Activated CD4-positive, alpha-beta T cell treated with anti-CD3 and anti-CD28 coated beads for 36 hours (primary cell): ENCODE measurements at regions of chr1 and their contacts with region 1.

Region 1: DNA sequence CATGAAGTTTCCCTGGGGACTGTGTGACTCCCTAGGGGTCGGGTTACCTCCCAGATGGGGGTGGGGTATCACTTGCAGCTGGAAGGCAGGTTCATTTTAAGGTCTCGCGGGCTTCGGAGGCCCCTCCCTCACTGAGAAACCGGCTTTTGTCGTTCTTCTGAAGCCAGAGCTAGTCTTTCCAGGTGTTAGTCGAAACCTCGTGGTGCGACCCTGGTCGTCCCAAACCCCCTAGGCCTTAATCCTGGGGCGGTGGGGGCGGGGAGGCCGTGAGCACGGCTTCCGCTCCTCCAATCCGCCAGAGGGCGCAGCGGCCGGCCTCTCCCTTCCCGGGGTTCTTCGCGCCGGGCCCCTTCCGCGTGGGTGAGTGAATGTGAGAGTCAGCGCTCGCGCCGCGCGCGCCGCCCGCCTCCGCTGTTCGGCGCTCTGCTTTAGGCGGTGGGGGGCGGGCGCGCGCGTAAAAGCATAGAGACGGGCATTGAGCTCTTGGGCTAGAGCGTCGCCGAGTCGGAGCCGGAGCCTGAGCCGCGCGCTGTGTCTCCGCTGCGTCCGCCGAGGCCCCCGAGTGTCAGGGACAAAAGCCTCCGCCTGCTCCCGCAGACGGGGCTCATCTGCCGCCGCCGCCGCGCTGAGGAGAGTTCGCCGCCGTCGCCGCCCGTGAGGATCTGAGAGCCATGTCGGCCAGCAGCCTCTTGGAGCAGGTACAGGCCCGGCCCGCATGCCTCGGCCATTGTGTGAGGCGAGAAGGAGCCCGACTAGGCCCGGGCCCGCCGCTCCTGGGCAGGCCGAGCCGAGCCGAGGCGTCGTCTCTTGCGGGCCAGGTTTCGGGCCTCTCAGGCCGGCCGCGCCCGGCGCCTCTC is at the start of gene YTHDF2:
- DNase-seq: peak; percentile 99
- ATAC-seq: peak; percentile 90
- H3K4me3 Mint-ChIP-seq: peak within 1 kb of the TSS; percentile 95
- H3K27ac Mint-ChIP-seq: peak within 1 kb of the TSS; percentile 90
- H3K4me1 Mint-ChIP-seq: peaks cover 31% of the 10 kb centered on the region
- H3K27me3 Mint-ChIP-seq: no peaks in the 10 kb centered on the region
- total RNA-seq, gene YTHDF2: 74.8 to 98.7 TPM

Region 2: DNA sequence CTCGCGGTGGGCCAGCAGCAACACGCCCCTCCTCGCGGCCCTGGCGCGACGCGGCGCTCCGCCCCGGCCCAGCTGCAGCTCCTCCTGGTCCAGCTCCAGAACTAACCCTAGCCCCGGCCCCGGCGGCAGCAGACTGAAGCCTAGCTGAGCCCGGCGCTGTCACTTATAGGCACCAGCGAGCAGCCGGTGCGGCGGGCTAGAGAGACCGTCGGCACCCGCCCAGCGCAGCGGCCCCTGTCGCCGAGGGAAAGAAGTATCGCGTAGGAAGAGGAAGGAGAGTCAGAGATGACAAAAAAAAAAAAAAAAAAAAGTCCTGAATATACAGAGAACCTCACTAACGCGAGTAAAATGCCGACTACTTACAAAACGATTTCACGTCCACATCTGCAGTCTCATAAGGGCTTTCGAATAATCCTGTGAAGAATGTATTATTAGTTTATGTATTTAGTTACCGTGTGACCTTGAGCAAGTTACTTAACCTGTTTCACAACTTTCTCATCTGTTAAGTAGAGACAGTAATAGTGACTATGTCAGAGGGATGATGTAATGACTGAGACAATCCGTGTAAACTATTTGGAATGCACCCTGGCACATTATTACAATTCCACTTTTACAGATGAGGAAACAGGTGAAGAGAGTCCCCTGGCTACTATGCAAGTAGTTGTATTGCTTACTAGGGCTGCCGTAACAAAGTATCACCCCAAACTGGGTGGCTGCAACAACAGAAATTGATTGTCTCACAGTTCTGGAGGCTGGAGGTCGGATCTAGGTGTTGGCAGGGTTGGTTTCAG is 1581.5 kb before region 1 on chr1 and contains the start of gene SLC9A1:
- CTCF ChIA-PET with region 1: no interaction called
- POLR2A ChIA-PET with region 1: no interaction called
- intact Hi-C with region 1: loop called in 1 of 2 experiments (anchors 5 kb)
- DNase-seq: peak; percentile 95
- ATAC-seq: peak; percentile 90
- H3K4me3 Mint-ChIP-seq: peak within 1 kb of the TSS; percentile 81
- H3K27ac Mint-ChIP-seq: peak within 1 kb of the TSS; percentile 97
- H3K4me1 Mint-ChIP-seq: peaks cover 42% of the 10 kb centered on the region
- H3K27me3 Mint-ChIP-seq: no peaks in the 10 kb centered on the region
- total RNA-seq, gene SLC9A1: 15.6 to 20.4 TPM

Region 3: GRCh38 chr1:28329395-28330153 is 407.1 kb before region 1 on chr1:
- CTCF ChIA-PET with region 1: no interaction called
- POLR2A ChIA-PET with region 1: no interaction called
- intact Hi-C with region 1: loop called in 1 of 2 experiments (anchors 1 kb)
- DNase-seq: peak; percentile 61
- ATAC-seq: peak; percentile 19
- H3K4me3 Mint-ChIP-seq: peak overlapping the region; percentile 96
- H3K27ac Mint-ChIP-seq: peak overlapping the region; percentile 97
- H3K4me1 Mint-ChIP-seq: peaks cover 39% of the 10 kb centered on the region
- H3K27me3 Mint-ChIP-seq: no peaks in the 10 kb centered on the region

Region 4: GRCh38 chr1:28518000-28518744 is 218.5 kb before region 1 on chr1:
- CTCF ChIA-PET with region 1: no interaction called
- POLR2A ChIA-PET with region 1: no interaction called
- intact Hi-C with region 1: loop called (anchors 1 to 5 kb)
- DNase-seq: peak; percentile 95
- ATAC-seq: peak; percentile 66
- H3K4me3 Mint-ChIP-seq: peak overlapping the region; percentile 77
- H3K27ac Mint-ChIP-seq: peak overlapping the region; percentile 83
- H3K4me1 Mint-ChIP-seq: peaks cover 34% of the 10 kb centered on the region
- H3K27me3 Mint-ChIP-seq: no peaks in the 10 kb centered on the region

Region 5: DNA sequence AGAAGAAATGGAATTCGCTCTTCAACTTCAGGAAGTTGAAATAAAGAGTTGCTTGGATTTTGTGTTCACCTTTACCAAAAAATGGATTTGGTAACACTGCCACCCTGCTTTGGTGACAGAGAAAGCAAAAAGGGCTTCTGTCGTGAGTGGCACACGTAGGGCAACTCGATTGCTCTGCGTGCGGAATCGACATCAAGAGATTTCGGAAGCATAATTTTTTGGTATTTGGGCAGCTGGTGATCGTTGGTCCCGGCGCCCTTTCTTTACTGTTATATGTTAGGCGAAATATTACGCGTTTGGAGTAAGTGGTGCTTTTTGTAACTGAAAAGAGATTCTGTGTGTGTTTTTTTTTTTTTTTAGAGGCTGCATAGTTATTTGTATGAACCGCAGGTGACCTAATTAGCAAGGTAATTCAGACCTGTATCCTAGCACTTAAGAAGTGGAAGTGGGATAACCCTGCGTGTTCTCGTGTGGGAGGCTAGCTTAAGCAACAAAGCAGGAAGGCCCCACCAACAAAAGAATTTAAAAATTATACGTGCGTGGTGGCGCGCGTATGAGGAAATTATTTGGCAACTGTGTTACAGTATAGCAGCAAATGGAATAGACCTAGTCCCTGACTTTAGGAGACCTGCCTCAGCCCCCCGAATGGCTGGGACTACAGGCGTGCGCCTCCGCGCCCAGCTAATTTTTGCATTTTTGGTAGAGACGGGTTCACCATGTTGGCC is 88.0 kb before region 1 on chr1 and contains the start of gene RNU11:
- CTCF ChIA-PET with region 1: interaction called, 24 read pairs
- POLR2A ChIA-PET with region 1: interaction called, 50 read pairs
- intact Hi-C with region 1: loop called (anchors 1 kb)
- DNase-seq: peak; percentile 93
- ATAC-seq: peak; percentile 83
- H3K4me3 Mint-ChIP-seq: peak within 1 kb of the TSS; percentile 83
- H3K27ac Mint-ChIP-seq: peak within 1 kb of the TSS; percentile 100
- H3K4me1 Mint-ChIP-seq: peaks cover 34% of the 10 kb centered on the region
- H3K27me3 Mint-ChIP-seq: no peaks in the 10 kb centered on the region
- total RNA-seq, gene RNU11: not detected

Region 6: GRCh38 chr1:28718586-28719331 is 17.9 kb before region 1 on chr1:
- CTCF ChIA-PET with region 1: interaction called, 10 read pairs
- POLR2A ChIA-PET with region 1: interaction called, 3 read pairs
- intact Hi-C with region 1: no loop called
- DNase-seq: no peak
- ATAC-seq: no peak
- H3K4me3 Mint-ChIP-seq: no peak overlapping the region
- H3K27ac Mint-ChIP-seq: no peak overlapping the region
- H3K4me1 Mint-ChIP-seq: no peaks in the 10 kb centered on the region
- H3K27me3 Mint-ChIP-seq: no peaks in the 10 kb centered on the region

Region 7: DNA sequence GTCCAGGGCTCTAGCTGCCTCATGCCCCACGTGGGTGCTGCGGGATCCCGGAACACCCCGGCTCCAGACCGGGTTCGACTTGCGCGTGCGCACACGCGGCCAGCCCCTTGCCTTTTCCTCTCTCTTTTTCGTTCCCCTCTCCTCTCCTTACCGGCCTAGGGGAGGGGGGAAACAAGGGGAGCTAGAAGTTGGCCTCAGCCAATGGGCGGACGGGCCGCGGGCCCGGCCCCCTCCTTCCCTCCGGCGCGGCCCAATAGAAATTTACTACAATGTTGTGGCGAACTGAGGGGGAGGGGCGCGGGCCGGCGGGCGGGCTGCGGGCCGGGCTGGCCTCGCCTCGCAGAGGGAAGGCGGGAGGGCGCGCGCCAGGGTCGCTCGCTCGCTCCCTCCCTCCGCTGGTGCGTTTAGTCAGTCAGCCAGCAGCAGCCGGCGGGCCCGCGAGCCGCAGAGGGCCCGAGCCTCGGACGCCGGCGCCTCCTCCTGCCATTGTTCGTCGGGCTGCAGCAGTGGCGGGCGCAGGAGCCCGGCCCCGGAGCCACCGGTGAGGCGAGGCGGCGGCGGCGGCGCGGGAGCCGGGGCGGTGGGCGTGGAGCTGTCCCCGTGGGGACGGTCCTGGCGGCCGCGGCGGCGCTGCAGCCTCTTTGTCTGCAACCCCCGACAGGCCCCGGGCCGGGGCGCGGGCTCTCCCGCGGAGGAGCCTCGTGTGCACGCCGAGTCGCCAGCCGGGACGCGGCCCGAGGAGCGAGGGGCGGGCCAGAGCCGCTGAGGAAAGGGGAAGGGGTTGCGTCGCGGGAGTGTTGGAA is 177.8 kb after region 1 on chr1 and contains the start of gene EPB41:
- CTCF ChIA-PET with region 1: no interaction called
- POLR2A ChIA-PET with region 1: no interaction called
- intact Hi-C with region 1: loop called in 1 of 2 experiments (anchors 1 kb)
- DNase-seq: peak; percentile 94
- ATAC-seq: peak; percentile 84
- H3K4me3 Mint-ChIP-seq: peak within 1 kb of the TSS; percentile 86
- H3K27ac Mint-ChIP-seq: peak within 1 kb of the TSS; percentile 93
- H3K4me1 Mint-ChIP-seq: peaks cover 47% of the 10 kb centered on the region
- H3K27me3 Mint-ChIP-seq: no peaks in the 10 kb centered on the region
- total RNA-seq, gene EPB41: 75.5 to 130 TPM